Breast epithelium (tissue), 4 donors: ENCODE measurements at regions of chr4 and their contacts with region 1.

Region 1: DNA sequence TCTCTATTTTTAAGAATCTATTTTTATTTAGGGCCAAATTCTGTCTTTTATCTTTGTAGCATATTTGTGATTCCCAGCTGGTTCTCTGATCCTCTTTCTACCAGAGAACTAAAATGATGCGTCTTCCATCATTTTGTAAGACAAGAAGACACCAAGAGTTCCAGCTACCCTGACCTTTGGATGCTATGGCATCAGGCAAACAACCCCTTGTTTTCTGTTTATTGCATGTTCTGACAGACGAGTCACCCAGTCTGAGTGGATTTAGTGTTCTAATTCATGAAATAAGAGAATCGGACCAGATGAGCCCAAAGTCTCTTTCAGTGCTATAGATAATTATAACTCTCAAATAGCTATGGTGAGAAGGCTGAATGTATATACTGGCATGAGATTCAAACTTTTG is 69.7 kb downstream of the ZFYVE28 start:
- DNase-seq: no peak
- H3K4me3 ChIP-seq: no peak overlapping the region
- H3K27ac ChIP-seq: no peak overlapping the region
- H3K4me1 ChIP-seq: no peaks in the 10 kb centered on the region
- H3K27me3 ChIP-seq: no peaks in the 10 kb centered on the region
- CTCF ChIP-seq: no peak
- POLR2A ChIP-seq: no peak

Region 2: DNA sequence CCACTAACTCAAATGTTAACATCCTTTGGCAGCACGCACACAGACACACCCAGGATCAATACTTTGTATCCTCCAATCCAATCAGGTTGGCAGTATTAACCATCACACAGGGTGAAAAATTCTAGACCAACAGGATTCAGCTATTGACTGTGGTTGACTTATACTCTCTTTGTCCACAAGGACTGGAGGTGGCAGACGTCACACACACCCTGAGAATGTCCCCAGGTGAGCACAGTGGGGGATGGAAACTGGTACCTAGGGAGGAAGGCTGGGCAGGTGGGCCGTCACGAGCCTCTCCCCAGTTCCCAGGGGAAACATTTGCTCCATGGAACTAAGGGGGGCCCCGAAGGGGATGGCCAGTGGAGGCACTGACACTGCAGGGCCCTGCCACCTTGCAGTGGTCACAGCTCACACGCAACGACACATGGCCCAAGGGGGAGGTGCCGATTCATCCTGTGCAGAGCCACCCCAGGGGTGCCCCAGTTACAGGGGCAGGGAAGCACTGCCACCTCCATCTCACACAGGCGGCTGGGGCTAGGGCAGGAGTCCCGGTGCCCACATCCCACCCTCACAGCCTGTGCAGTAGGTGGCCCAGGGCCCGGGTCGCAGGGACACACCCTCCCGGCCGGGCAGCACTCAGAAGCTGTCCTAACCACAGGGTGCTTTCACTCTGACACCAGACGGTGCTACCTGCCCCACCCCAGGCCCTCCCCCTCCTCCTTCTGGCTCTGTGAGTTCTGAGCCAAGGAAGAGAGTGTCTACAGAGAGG is 52.2 kb after region 1 on chr4:
- intact Hi-C with region 1: loop called (anchors 2 kb)
- DNase-seq: no peak
- H3K4me3 ChIP-seq: peak overlapping the region in 1 of 3 donors; percentile 40
- H3K27ac ChIP-seq: no peak overlapping the region
- H3K4me1 ChIP-seq: peaks cover 0 to 9% of the 10 kb centered on the region in 2 donors
- H3K27me3 ChIP-seq: no peaks in the 10 kb centered on the region
- CTCF ChIP-seq: no peak
- POLR2A ChIP-seq: no peak